HEK293 (cell line): ENCODE measurements at regions of chr15 and their contacts with region 1.

Region 1: DNA sequence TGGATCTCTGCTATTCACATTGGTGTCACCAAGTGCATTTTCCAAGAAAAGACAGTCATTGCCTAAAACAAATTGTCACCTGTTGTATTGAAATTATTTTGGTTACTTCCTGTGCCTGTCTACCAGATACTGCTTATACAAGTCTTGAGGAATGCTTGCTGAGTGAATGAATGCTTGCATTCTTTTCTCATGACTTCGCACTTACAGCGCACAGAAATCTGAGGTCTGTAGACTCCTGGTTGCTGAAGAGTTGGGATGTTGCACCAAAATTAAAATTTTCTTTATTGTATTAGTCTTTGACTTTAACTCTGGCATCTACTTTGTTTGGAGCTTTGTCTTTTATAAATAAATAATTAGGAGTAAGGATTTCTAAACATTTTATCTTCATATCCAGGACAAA is 28.4 kb downstream of the SH3GL3 start:
- H3K4me3 ChIP-seq: no peak overlapping the region
- H3K27ac ChIP-seq: no peak overlapping the region
- H3K4me1 ChIP-seq: peaks cover 6% of the 10 kb centered on the region
- CTCF ChIP-seq: no peak

Region 2: DNA sequence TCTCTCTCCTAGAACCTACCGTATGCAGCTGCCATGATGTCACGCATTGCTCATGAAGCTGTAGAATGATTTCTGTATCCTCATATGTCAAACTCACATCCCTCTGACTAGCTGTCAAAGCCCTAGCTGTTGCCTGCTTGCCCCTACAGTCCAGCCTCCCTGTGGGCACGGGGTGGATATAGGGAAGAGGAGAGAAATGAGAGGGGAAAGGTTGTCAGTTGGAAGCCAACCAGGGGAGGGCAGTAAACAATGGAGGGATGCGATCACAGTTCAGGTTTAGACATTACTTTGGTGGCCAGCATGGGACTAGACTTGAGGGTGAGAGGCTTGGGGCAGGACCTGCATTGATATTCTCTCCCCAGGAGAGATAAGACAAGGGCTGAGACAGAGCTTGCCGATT is 266.2 kb before region 1 on chr15:
- CTCF ChIA-PET with region 1: no interaction called
- POLR2A ChIA-PET with region 1: interaction called, 12 read pairs
- H3K4me3 ChIP-seq: no peak overlapping the region
- H3K27ac ChIP-seq: no peak overlapping the region
- H3K4me1 ChIP-seq: peaks cover 16% of the 10 kb centered on the region
- CTCF ChIP-seq: 0 out of 2 replicates have a peak, but pooled peaks have one; percentile 9